Dorsolateral prefrontal cortex (tissue), 120 donors: ENCODE measurements at regions of chr19 and their contacts with region 1.

Region 1: GRCh38 chr19:5577785-5578493 is 10.2 kb upstream of the TINCR start:
- DNase-seq: peak; percentile 41 to 80 (median 66)
- H3K4me3 ChIP-seq: peak overlapping the region in 51 of 59 donors; percentile 11 to 56 (median 38)
- H3K27ac ChIP-seq: peak overlapping the region in 2 of 59 donors; percentile 11 to 53
- H3K27me3 ChIP-seq: no peaks in the 10 kb centered on the region
- CTCF ChIP-seq: peak; percentile 87 to 100 (median 98)

Region 2: DNA sequence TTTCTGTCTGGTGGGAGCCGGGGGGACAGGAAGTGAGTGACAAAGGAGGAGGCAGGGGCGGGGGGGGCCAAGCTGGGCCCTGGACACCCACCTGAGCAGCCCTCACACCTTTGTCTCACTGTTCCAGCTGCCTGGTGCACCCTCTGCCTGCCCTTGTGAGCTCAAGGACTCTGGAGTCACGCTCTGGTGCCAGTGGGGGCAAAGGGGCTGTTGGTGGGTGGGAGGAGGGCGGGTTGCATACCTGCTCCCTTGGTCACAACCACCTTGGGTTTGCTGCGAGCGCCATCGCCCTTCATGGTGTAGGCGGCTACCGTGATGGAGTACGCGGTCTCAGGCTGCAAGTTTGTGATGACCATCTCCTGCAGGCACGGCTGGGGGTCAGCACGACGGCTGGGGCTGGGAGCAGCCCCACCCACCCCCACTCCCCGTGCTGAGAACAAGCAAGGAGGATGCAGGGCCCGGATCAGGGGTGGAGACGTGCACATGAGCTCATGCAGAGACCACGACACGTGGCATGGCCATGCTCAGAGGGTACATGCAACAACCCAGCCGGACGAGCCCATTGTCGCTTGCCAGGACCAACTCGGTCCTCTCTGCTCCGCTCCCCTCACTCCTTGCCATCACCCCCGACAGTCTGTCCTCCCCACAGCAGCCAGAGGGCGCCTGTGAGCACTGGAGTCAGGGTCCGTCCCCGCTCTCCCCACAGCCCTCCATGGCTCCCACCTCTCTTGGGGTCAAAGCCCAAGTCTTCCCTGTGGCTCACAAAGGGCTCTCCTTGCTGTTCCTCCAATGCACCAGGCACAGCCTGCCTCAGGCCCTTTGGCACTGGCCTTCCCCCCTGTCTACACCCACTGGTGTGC is 352.2 kb before region 1 on chr19:
- intact Hi-C with region 1: loop called in 1 of 2 experiments (anchors 5 kb)
- DNase-seq: no peak
- H3K4me3 ChIP-seq: no peak overlapping the region
- H3K27ac ChIP-seq: no peak overlapping the region
- H3K27me3 ChIP-seq: no peaks in the 10 kb centered on the region
- CTCF ChIP-seq: peak in 54 of 56 donors; percentile 15 to 69 (median 54)

Region 3: GRCh38 chr19:5622463-5623396 is 44.8 kb after region 1 on chr19 and contains the starts of genes SAFB and SAFB2:
- intact Hi-C with region 1: no loop called
- DNase-seq: peak; percentile 96 to 99 (median 97)
- H3K4me3 ChIP-seq: peak within 1 kb of the TSS; percentile 77 to 100 (median 98)
- H3K27ac ChIP-seq: peak within 1 kb of the TSS; percentile 80 to 99 (median 96)
- H3K27me3 ChIP-seq: no peaks in the 10 kb centered on the region
- CTCF ChIP-seq: peak in 30 of 56 donors; percentile 7 to 60 (median 32)
- total RNA-seq, gene SAFB: 102 to 184 (median 133) TPM
- total RNA-seq, gene SAFB2: 117 to 326 (median 190) TPM